GM12878 (cell line): ENCODE measurements at regions of chr17 and their contacts with region 1.

Region 1: GRCh38 chr17:48724251-48725003 is 1.4 kb downstream of the PRAC2 start:
- DNase-seq: peak; percentile 3
- ATAC-seq: peak; percentile 94
- H3K4me3 ChIP-seq: no peak overlapping the region
- H3K27ac ChIP-seq: no peak overlapping the region
- H3K4me1 ChIP-seq: no peaks in the 10 kb centered on the region; the same call in 1 of the 2 replicates
- H3K27me3 ChIP-seq: peaks cover 34 to 58% of the 10 kb centered on the region in 2 experiments
- CTCF ChIP-seq: peak; percentile 60 to 75 (median 73)
- EP300 ChIP-seq: no peak
- POLR2A ChIP-seq: no peak
- RAD21 ChIP-seq: peak; percentile 83

Region 2: GRCh38 chr17:48593840-48594537 is 130.4 kb before region 1 on chr17:
- CTCF ChIA-PET with region 1: no interaction called
- POLR2A ChIA-PET with region 1: no interaction called
- RAD21 ChIA-PET with region 1: no interaction called
- SMC1A ChIA-PET with region 1: no interaction called
- in situ Hi-C with region 1: no loop called
- intact Hi-C with region 1: no loop called
- DNase-seq: no peak
- ATAC-seq: peak; percentile 75
- H3K4me3 ChIP-seq: no peak overlapping the region; the same call in 1 of the 2 replicates
- H3K27ac ChIP-seq: no peak overlapping the region
- H3K4me1 ChIP-seq: peaks cover 10% of the 10 kb centered on the region
- H3K27me3 ChIP-seq: peaks cover 5 to 33% of the 10 kb centered on the region in 2 experiments
- CTCF ChIP-seq: peak; percentile 91 to 97 (median 94)
- EP300 ChIP-seq: no peak
- POLR2A ChIP-seq: no peak
- RAD21 ChIP-seq: peak; percentile 80

Region 3: DNA sequence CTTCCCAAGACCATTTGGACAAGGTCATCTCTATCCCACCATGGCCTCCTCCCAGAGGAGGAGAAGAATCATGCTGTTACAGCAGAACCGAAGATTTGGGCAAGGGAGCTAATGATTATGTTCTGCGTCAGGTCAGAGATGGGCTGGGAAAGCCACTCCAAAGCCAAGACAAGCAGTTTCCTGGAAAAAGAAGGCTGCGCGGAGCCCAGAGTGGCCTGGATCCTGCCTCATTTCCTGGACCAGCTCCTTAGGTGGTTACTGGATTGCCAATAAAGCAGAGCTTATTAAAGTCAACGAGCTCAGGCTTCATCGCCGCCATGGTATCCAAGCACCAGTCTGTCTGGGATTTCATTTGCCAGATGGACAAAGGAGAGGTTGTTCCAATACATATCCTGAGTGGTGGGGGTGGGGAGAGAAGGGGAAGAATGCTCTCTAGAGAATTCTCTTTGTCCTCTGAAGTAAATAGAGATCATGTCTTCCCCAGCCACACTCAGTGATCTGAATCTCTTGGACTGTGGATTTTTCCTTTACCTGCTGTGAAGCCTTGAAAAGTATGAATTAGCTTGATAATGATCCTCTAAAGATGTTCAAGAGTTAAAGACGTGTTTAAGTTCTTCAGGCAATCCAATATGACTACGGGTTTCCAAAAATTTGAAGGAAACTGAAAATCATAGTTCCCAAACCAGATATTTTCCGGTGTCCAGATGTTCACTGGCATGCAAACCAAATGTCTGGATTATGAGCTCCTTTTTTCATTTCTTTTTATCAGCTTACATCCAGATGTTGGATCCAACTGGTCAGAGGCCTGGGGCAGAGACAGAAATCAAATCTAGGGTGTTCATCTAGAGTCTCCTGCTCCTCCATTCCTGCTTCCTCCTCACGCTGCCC is 19.8 kb before region 1 on chr17:
- CTCF ChIA-PET with region 1: interaction called, 13 read pairs
- POLR2A ChIA-PET with region 1: interaction called, 3 read pairs
- RAD21 ChIA-PET with region 1: no interaction called
- SMC1A ChIA-PET with region 1: interaction called, 6 read pairs
- in situ Hi-C with region 1: no loop called
- intact Hi-C with region 1: no loop called
- DNase-seq: no peak
- ATAC-seq: no peak
- H3K4me3 ChIP-seq: no peak overlapping the region
- H3K27ac ChIP-seq: no peak overlapping the region
- H3K4me1 ChIP-seq: no peaks in the 10 kb centered on the region
- H3K27me3 ChIP-seq: peaks cover 0 to 2% of the 10 kb centered on the region in 2 experiments; a peak in 3 of 4 replicates
- CTCF ChIP-seq: no peak
- EP300 ChIP-seq: no peak
- POLR2A ChIP-seq: no peak
- RAD21 ChIP-seq: no peak

Region 4: DNA sequence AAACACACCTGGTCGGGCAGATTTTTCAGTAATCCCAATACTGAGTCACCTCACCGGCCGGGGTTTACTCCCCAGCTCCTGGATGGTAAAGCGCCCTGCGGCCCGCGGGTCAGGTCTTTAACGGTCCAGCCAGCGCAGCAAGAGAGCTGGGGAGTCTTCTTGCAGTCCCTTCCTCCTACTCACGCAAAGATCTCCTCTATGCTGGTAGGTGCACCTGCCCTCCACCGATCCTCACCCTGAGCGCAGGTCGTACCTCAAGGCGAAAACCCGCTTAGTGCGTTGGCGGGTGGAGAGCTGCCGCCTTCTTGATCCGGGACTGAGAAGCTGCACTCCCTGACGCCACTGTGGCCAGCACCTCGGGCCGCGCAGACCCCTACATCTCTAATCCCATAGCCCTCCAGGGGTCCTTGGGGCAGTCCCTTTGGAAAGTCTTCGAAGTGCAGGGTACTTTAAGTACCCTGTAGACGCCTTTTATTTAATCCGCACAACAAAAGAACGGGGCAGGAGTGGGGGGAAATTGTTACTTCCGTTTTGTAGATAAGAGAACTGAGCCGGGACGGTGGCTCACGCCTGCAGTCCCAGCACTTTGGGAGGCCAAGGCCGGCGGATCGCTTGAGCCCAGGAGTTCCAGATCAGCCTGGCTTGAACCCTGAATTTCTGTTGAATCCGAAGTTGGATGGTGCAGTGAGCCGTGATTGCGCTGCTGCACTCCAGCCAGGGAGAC is 14.5 kb after region 1 on chr17:
- CTCF ChIA-PET with region 1: interaction called, 12 read pairs
- POLR2A ChIA-PET with region 1: no interaction called
- RAD21 ChIA-PET with region 1: interaction called, 3 read pairs
- SMC1A ChIA-PET with region 1: interaction called, 4 read pairs
- in situ Hi-C with region 1: no loop called
- intact Hi-C with region 1: no loop called
- DNase-seq: no peak
- ATAC-seq: no peak
- H3K4me3 ChIP-seq: no peak overlapping the region
- H3K27ac ChIP-seq: no peak overlapping the region
- H3K4me1 ChIP-seq: no peaks in the 10 kb centered on the region
- H3K27me3 ChIP-seq: peaks cover 20 to 44% of the 10 kb centered on the region in 2 experiments
- CTCF ChIP-seq: no peak
- EP300 ChIP-seq: no peak
- POLR2A ChIP-seq: no peak
- RAD21 ChIP-seq: no peak

Region 5: GRCh38 chr17:48756830-48757251 is 32.4 kb after region 1 on chr17:
- CTCF ChIA-PET with region 1: interaction called, 13 read pairs
- POLR2A ChIA-PET with region 1: no interaction called
- RAD21 ChIA-PET with region 1: no interaction called
- SMC1A ChIA-PET with region 1: no interaction called
- in situ Hi-C with region 1: no loop called
- intact Hi-C with region 1: no loop called
- DNase-seq: no peak
- ATAC-seq: peak; percentile 40; the same call in 1 of the 3 replicates
- H3K4me3 ChIP-seq: no peak overlapping the region
- H3K27ac ChIP-seq: no peak overlapping the region
- H3K4me1 ChIP-seq: no peaks in the 10 kb centered on the region
- H3K27me3 ChIP-seq: peaks cover 21 to 23% of the 10 kb centered on the region in 2 experiments
- CTCF ChIP-seq: no peak
- EP300 ChIP-seq: no peak
- POLR2A ChIP-seq: no peak
- RAD21 ChIP-seq: no peak

Region 6: GRCh38 chr17:48791128-48792032 is 67.0 kb after region 1 on chr17:
- CTCF ChIA-PET with region 1: interaction called, 80 read pairs
- POLR2A ChIA-PET with region 1: no interaction called
- RAD21 ChIA-PET with region 1: interaction called, 8 read pairs
- SMC1A ChIA-PET with region 1: interaction called, 3 read pairs
- in situ Hi-C with region 1: no loop called
- intact Hi-C with region 1: loop called (anchors 5 kb)
- DNase-seq: peak; percentile 57
- ATAC-seq: peak; percentile 93
- H3K4me3 ChIP-seq: no peak overlapping the region
- H3K27ac ChIP-seq: no peak overlapping the region
- H3K4me1 ChIP-seq: peaks cover 11% of the 10 kb centered on the region
- H3K27me3 ChIP-seq: no peaks in the 10 kb centered on the region; a peak in 1 of 4 replicates
- CTCF ChIP-seq: peak; percentile 49 to 57 (median 54)
- EP300 ChIP-seq: peak in 1 of 2 experiments; percentile 30; a peak in 1 of 4 replicates
- POLR2A ChIP-seq: no peak
- RAD21 ChIP-seq: peak; percentile 58

Region 7: DNA sequence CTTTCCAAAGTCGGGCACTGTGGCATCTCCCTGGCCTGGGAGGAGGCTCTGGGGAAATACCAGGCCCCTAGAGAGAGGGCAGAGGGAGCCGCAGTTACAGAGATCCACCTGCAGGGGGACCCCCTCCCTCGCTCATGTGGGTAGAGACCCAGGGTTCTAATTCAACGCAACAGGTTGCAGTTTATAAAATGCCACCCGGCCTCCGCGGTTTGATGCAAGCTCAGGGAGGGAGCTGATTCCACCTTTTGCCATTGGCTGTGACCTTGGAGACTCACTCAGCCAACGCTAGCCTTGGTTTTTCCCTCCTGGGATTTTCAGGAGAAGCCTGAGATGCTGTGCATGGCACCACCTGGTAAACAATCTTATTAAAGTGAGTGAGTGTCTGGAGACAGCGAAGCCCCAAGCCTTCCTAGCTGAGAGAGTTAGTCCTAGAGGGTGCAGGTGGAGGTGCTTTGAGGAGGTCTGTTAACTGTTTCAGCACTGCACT is 80.5 kb after region 1 on chr17:
- CTCF ChIA-PET with region 1: interaction called, 38 read pairs
- POLR2A ChIA-PET with region 1: no interaction called
- RAD21 ChIA-PET with region 1: interaction called, 5 read pairs
- SMC1A ChIA-PET with region 1: interaction called, 8 read pairs
- in situ Hi-C with region 1: no loop called
- intact Hi-C with region 1: no loop called
- DNase-seq: no peak
- ATAC-seq: peak; percentile 98
- H3K4me3 ChIP-seq: no peak overlapping the region
- H3K27ac ChIP-seq: no peak overlapping the region
- H3K4me1 ChIP-seq: no peaks in the 10 kb centered on the region
- H3K27me3 ChIP-seq: no peaks in the 10 kb centered on the region; a peak in 2 of 4 replicates
- CTCF ChIP-seq: peak; percentile 89 to 95 (median 90)
- EP300 ChIP-seq: no peak
- POLR2A ChIP-seq: no peak
- RAD21 ChIP-seq: peak; percentile 93